Right lobe of liver (tissue), 6 donors: ENCODE measurements at regions of chr1 and their contacts with region 1.

Region 1: GRCh38 chr1:180533266-180533987 is 25.3 kb upstream of the OVAAL start:
- DNase-seq: peak; percentile 58 to 68 (median 65)
- ATAC-seq: peak; percentile 82 to 93 (median 86)
- H3K4me3 ChIP-seq: no peak overlapping the region
- H3K27ac ChIP-seq: no peak overlapping the region
- H3K4me1 ChIP-seq: no peaks in the 10 kb centered on the region
- H3K27me3 ChIP-seq: no peaks in the 10 kb centered on the region
- CTCF ChIP-seq: peak; percentile 71 to 88 (median 80)
- POLR2A ChIP-seq: no peak

Region 2: GRCh38 chr1:180594723-180595122 is 61.3 kb after region 1 on chr1:
- intact Hi-C with region 1: no loop called
- DNase-seq: no peak
- ATAC-seq: no peak
- H3K4me3 ChIP-seq: no peak overlapping the region
- H3K27ac ChIP-seq: no peak overlapping the region
- H3K4me1 ChIP-seq: no peaks in the 10 kb centered on the region
- H3K27me3 ChIP-seq: no peaks in the 10 kb centered on the region
- CTCF ChIP-seq: no peak
- POLR2A ChIP-seq: no peak

Region 3: GRCh38 chr1:180863158-180863775 is 329.8 kb after region 1 on chr1:
- intact Hi-C with region 1: loop called in 1 of 2 experiments (anchors 10 kb)
- DNase-seq: no peak
- ATAC-seq: peak; percentile 52 to 79 (median 74)
- H3K4me3 ChIP-seq: no peak overlapping the region
- H3K27ac ChIP-seq: no peak overlapping the region
- H3K4me1 ChIP-seq: peaks cover 0 to 17% (median 4%) of the 10 kb centered on the region in 4 donors
- H3K27me3 ChIP-seq: no peaks in the 10 kb centered on the region
- CTCF ChIP-seq: peak; percentile 70 to 79 (median 72)
- POLR2A ChIP-seq: no peak